Activated CD4-positive, alpha-beta memory T cell treated with anti-CD3 and anti-CD28 coated beads for 36 hours (primary cell): ENCODE measurements at regions of chr5 and their contacts with region 1.

Region 1: DNA sequence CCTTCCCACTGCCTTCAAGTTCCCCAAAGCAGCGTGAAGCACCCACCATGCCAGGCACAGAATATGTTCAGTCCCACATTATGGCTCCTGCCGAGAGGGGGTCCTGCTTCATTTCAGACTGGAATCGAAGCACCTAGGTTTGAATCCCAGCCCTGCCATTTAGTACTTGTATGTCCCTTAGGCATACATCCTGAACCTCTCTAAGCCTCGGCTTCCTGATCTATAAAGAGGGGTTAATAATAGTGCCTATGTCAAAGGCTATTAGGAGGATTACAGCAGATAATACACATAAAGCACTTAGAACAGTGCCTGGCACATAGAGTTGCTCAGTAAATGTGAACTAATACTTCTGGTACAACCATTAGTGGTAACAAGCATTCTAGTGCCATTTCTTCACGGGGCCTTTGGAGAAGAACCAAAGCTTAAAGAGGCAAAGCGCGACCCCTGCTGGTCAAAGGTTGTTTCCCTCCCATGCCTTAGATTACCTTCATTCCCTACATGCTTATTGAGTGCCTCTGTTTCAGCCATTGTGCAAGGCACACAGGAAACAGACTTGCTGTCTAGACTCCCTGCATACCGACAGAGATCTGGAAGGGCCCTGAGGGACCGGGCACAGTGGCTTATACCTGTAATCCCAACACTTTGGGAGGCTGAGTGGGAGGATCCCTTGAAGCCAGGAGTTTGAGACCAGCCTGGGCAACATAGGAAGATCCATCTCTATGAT is 98.2 kb downstream of the PPARGC1B start:
- DNase-seq: peak; percentile 88
- H3K4me3 Mint-ChIP-seq: no peak overlapping the region
- H3K27ac Mint-ChIP-seq: no peak overlapping the region
- H3K4me1 Mint-ChIP-seq: peaks cover 5% of the 10 kb centered on the region
- H3K27me3 Mint-ChIP-seq: no peaks in the 10 kb centered on the region

Region 2: GRCh38 chr5:149596713-149597112 is 231.6 kb before region 1 on chr5:
- CTCF ChIA-PET with region 1: no interaction called
- POLR2A ChIA-PET with region 1: no interaction called
- intact Hi-C with region 1: no loop called
- DNase-seq: no peak
- H3K4me3 Mint-ChIP-seq: no peak overlapping the region
- H3K27ac Mint-ChIP-seq: no peak overlapping the region
- H3K4me1 Mint-ChIP-seq: no peaks in the 10 kb centered on the region
- H3K27me3 Mint-ChIP-seq: peaks cover 2% of the 10 kb centered on the region

Region 3: GRCh38 chr5:149636851-149637246 is 191.5 kb before region 1 on chr5:
- CTCF ChIA-PET with region 1: interaction called, 239 read pairs
- POLR2A ChIA-PET with region 1: no interaction called
- intact Hi-C with region 1: loop called (anchors 1 kb)
- DNase-seq: peak; percentile 74
- H3K4me3 Mint-ChIP-seq: no peak overlapping the region
- H3K27ac Mint-ChIP-seq: no peak overlapping the region
- H3K4me1 Mint-ChIP-seq: peaks cover 16% of the 10 kb centered on the region
- H3K27me3 Mint-ChIP-seq: no peaks in the 10 kb centered on the region

Region 4: GRCh38 chr5:149667084-149667828 is 161.1 kb before region 1 on chr5:
- CTCF ChIA-PET with region 1: interaction called, 86 read pairs
- POLR2A ChIA-PET with region 1: no interaction called
- intact Hi-C with region 1: loop called (anchors 1 kb)
- DNase-seq: peak; percentile 34
- H3K4me3 Mint-ChIP-seq: no peak overlapping the region
- H3K27ac Mint-ChIP-seq: no peak overlapping the region
- H3K4me1 Mint-ChIP-seq: no peaks in the 10 kb centered on the region
- H3K27me3 Mint-ChIP-seq: peaks cover 6% of the 10 kb centered on the region

Region 5: GRCh38 chr5:149790276-149790675 is 38.0 kb before region 1 on chr5:
- CTCF ChIA-PET with region 1: no interaction called
- POLR2A ChIA-PET with region 1: no interaction called
- intact Hi-C with region 1: no loop called
- DNase-seq: no peak
- H3K4me3 Mint-ChIP-seq: no peak overlapping the region
- H3K27ac Mint-ChIP-seq: no peak overlapping the region
- H3K4me1 Mint-ChIP-seq: peaks cover 3% of the 10 kb centered on the region
- H3K27me3 Mint-ChIP-seq: no peaks in the 10 kb centered on the region

Region 6: DNA sequence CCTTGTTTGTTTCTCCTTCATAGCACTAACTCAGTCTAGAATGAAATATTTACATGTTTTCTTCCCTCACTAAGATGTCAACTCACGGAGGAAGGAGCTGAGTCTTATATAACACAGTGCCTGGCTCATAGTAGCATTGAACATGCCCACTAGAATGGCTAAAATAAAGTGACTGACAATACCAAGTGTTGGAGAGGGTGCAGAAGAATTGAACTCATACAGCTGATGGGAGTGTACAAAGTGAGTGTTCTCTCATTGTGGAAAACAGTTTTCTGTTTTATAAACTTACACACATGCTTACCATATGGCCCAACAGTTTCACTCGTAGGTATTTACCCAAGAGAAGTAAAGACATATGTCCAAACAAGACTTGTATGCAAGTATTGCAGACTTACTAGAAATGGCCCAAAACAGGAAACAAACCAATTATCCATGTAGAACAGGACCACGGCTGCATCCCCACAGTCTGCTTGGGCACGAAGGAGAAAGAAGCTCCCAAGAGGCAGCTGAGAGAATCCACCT is 10.7 kb before region 1 on chr5:
- CTCF ChIA-PET with region 1: interaction called, 35 read pairs
- POLR2A ChIA-PET with region 1: no interaction called
- intact Hi-C with region 1: no loop called
- DNase-seq: no peak
- H3K4me3 Mint-ChIP-seq: no peak overlapping the region
- H3K27ac Mint-ChIP-seq: no peak overlapping the region
- H3K4me1 Mint-ChIP-seq: no peaks in the 10 kb centered on the region
- H3K27me3 Mint-ChIP-seq: no peaks in the 10 kb centered on the region

Region 7: DNA sequence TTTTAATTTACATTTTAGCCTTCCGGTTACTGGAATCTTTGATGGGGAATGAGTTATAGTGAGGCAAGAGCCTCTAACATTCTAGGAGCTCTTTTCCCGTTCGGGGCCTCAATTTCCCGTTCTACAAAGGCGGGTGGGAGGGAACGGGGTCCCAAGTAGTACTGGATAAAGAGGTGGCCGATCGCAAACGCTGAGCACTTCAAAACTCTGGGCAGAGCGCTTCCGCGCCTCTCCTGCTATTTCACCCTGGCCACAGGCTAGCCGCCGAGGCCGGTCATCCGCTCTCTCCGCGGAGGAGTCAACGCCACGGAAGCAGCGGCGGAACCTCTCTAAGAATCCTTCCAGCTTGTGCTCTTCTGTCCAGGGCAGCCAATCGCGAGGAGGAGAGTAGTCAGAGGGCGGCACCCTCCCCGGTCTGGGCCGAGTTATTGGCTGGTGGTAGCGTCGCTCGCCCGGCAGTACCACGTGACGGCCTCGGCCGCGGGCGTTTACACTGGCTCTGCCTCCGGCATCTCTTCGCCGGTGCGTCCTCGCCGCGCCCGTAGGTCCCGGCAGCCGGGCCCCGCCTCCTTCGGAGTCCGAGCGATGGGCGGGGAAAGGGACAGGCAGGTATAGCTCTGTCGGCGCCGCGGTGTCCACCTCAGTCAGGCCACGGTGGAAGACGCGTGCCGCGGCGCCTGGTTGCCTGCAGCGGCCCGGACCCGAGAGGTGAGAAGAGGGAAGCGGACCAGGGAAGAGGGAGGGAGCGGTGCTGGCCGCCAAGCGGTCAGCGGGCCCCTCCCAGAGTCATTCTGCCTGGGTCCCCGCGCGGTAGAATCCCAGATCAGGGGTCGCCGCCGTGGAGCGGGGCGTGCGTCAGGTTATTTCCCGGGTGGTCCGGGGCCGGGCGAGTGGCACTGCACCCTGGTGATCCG is 132.2 kb after region 1 on chr5 and contains the start of gene SLC26A2:
- CTCF ChIA-PET with region 1: interaction called, 172 read pairs
- POLR2A ChIA-PET with region 1: no interaction called
- intact Hi-C with region 1: no loop called
- DNase-seq: peak; percentile 97
- H3K4me3 Mint-ChIP-seq: peak within 1 kb of the TSS; percentile 91
- H3K27ac Mint-ChIP-seq: peak within 1 kb of the TSS; percentile 97
- H3K4me1 Mint-ChIP-seq: peaks cover 25% of the 10 kb centered on the region
- H3K27me3 Mint-ChIP-seq: no peaks in the 10 kb centered on the region
- total RNA-seq, gene SLC26A2: 5.9 to 6.2 TPM

Region 8: DNA sequence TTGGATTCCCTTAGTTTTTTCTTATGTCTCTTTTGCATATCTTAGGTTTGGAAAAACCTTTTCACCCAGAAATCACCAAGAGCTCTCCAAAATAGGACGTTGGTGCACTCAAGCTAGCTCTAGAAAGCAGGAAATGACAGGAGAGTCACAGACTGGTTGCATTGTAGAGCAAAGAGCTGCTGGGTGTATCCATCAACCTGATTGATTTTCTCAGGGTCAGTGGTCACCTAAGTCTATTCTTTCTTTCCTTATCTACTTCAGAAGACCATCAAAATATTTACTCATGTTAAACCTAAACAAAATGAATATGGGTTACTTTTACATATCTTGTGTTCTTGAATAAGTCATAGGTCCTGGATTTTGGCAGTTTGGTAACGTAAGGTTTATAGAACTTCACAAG is 147.1 kb after region 1 on chr5:
- CTCF ChIA-PET with region 1: no interaction called
- POLR2A ChIA-PET with region 1: no interaction called
- intact Hi-C with region 1: no loop called
- DNase-seq: no peak
- H3K4me3 Mint-ChIP-seq: no peak overlapping the region
- H3K27ac Mint-ChIP-seq: no peak overlapping the region
- H3K4me1 Mint-ChIP-seq: peaks cover 5% of the 10 kb centered on the region
- H3K27me3 Mint-ChIP-seq: no peaks in the 10 kb centered on the region

Region 9: GRCh38 chr5:150263801-150264621 is 435.7 kb after region 1 on chr5:
- CTCF ChIA-PET with region 1: no interaction called
- POLR2A ChIA-PET with region 1: no interaction called
- intact Hi-C with region 1: no loop called
- DNase-seq: no peak
- H3K4me3 Mint-ChIP-seq: no peak overlapping the region
- H3K27ac Mint-ChIP-seq: no peak overlapping the region
- H3K4me1 Mint-ChIP-seq: no peaks in the 10 kb centered on the region
- H3K27me3 Mint-ChIP-seq: peaks cover 1% of the 10 kb centered on the region